ENCODE measurements at regions of chr16 and their contacts with region 1.

Region 1: GRCh38 chr16:30534368-30535105 is at the start of gene ZNF747:
- DNase-seq: peak; percentile 92
- CTCF ChIP-seq: peak; percentile 11

Region 2: GRCh38 chr16:30548416-30549253 is 14.1 kb after region 1 on chr16:
- CTCF ChIA-PET with region 1: interaction called, 16 read pairs
- POLR2A ChIA-PET with region 1: interaction called, 10 read pairs
- DNase-seq: no peak
- CTCF ChIP-seq: no peak

Region 3: DNA sequence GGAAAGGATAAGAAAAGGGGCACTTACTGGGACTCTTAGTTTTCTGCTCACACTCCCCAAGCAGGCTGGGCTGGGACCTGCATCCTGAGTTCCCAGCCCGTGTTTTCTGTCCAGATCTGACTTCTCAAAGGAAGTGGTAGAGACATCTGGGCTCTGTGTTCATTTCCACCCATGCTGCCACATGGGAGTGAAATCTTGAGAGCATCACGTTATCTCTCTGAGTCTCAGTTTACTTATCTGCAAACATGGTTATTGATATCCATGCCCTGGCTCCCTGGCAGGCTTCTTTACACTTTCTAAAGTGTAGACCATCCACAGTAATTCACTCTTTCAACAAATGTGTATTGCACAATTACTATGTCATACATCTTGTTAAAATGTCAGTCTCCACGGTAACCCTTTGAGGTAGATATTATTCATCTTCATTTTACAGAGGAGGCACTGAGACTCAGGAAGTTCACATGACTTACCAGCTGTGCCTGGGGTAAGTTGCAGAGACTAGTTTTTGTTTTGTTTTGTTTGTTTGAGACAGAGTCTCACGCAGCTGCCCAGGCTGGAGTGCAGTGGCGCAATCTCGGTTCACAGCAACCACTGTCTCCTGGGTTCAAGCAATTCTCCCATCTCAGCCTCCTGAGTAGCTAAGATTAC is 33.6 kb after region 1 on chr16:
- CTCF ChIA-PET with region 1: interaction called, 10 read pairs
- POLR2A ChIA-PET with region 1: no interaction called
- DNase-seq: peak; percentile 62
- CTCF ChIP-seq: no peak

Region 4: DNA sequence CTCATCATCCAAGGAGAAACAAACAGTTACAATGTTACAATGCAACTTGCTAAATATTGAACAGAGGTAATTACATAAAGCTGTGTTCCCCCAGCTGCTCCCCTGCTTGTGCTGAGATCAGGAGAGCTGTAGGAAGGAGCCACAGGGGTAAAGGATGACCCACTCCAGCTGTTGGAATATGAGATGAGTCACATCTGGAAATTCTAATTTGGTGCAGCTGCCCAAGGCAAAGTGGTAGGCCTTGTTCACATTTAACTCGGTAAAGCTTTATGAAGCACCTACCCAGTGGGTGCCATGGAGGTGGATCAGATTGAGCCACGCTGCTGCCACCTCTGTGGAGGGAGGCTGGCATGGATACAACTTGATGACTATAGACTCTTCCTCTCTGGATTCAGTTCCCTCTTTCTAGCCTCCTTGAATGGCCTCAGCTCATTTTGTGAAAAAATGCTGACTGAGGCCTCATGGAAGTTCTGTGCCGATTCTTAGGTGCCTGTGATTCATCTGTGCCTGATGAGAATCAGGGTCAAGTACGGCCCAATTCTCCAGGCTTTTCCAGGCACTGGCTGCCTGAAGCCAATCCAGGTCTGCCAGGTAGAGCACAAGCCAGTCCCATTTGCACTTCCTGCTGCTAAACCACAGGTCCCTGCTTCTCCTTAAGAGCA is 68.2 kb after region 1 on chr16:
- CTCF ChIA-PET with region 1: interaction called, 11 read pairs
- POLR2A ChIA-PET with region 1: no interaction called
- DNase-seq: no peak
- CTCF ChIP-seq: no peak